ENCODE measurements at regions of chr11 and their contacts with region 1.

Region 1: DNA sequence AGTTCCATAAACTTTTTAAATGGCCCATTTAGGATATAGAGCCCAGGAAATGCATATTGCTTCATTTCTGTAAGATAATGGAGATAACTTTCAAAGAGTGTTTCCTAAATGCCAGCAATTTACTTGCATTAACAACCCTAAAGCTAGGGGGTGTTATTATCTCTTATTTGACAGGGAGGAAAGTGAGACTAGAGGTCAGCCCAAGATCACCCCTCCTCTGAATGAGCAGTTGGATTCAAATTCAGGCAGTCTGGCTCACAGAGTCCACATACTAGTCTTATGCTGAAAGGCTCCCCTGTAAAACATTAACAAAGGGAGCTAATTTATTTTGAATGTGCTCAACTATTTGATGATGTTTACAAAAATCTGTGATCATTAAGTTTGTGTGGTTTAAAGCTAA is 49.9 kb upstream of the TRIM77 start:
- DNase-seq: no peak
- ATAC-seq: no peak
- H3K4me3 ChIP-seq: no peak overlapping the region
- H3K27ac ChIP-seq: no peak overlapping the region
- H3K4me1 ChIP-seq: no peaks in the 10 kb centered on the region
- H3K27me3 ChIP-seq: no peaks in the 10 kb centered on the region
- CTCF ChIP-seq: no peak
- EP300 ChIP-seq: no peak
- POLR2A ChIP-seq: no peak
- RAD21 ChIP-seq: no peak

Region 2: DNA sequence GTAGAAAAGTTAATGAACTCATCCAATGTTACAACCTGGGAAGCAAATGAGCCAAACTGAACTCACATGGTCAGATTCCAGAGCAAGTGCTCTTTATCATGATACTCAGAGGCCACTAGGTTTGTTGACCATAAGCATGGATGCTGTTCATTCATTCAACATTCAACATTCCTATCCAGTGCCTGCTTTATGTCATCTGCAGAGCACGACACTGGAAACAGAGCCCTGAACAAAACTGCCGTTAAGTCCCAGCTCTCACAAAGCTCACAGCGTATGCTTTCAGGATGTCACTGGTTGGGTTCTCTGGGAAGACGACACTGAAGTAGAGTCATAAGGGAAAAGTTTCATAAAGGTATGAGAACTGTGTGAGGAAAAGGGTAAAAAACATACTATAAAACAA is 56.0 kb before region 1 on chr11:
- CTCF ChIA-PET with region 1: no interaction called
- POLR2A ChIA-PET with region 1: no interaction called
- RAD21 ChIA-PET with region 1: no interaction called
- SMC1A ChIA-PET with region 1: no interaction called
- in situ Hi-C with region 1: no loop called
- intact Hi-C with region 1: no loop called
- DNase-seq: no peak
- ATAC-seq: no peak
- H3K4me3 ChIP-seq: no peak overlapping the region
- H3K27ac ChIP-seq: no peak overlapping the region
- H3K4me1 ChIP-seq: no peaks in the 10 kb centered on the region
- H3K27me3 ChIP-seq: no peaks in the 10 kb centered on the region
- CTCF ChIP-seq: no peak
- EP300 ChIP-seq: no peak
- POLR2A ChIP-seq: no peak
- RAD21 ChIP-seq: no peak

Region 3: DNA sequence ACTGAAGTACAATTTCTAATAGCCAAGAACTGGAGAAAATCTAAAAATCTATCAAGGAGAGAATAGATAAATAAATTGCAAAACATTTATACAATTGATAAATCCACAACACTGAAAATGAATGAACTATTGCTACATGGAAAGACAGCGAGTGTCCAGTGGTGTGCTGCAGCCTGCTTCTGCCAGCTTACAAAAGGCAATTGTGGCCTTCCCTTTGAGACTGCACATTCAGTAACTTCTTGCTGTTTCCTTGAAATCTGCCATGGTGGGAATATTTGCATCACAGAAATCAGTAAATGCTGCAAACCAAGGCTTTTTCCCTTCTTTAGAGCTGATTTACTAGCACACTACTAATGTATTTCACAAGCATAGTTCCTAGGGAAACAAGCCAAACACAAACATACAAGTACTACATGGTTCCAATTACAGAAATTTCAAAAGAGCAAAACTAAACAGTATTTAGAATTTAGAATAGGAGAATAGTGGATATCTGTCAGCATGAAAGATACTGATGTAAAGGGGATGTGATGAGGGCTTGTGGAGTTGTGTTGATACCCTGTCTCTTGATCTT is 27.0 kb before region 1 on chr11:
- CTCF ChIA-PET with region 1: no interaction called
- POLR2A ChIA-PET with region 1: no interaction called
- RAD21 ChIA-PET with region 1: no interaction called
- SMC1A ChIA-PET with region 1: no interaction called
- in situ Hi-C with region 1: no loop called
- intact Hi-C with region 1: no loop called
- DNase-seq: no peak
- ATAC-seq: no peak
- H3K4me3 ChIP-seq: no peak overlapping the region
- H3K27ac ChIP-seq: no peak overlapping the region
- H3K4me1 ChIP-seq: no peaks in the 10 kb centered on the region
- H3K27me3 ChIP-seq: no peaks in the 10 kb centered on the region
- CTCF ChIP-seq: no peak
- EP300 ChIP-seq: no peak
- POLR2A ChIP-seq: no peak
- RAD21 ChIP-seq: no peak

Region 4: GRCh38 chr11:90113541-90113940 is 453.3 kb after region 1 on chr11:
- CTCF ChIA-PET with region 1: no interaction called
- POLR2A ChIA-PET with region 1: no interaction called
- RAD21 ChIA-PET with region 1: no interaction called
- SMC1A ChIA-PET with region 1: no interaction called
- in situ Hi-C with region 1: loop called (anchors 25 kb)
- intact Hi-C with region 1: no loop called
- DNase-seq: no peak
- ATAC-seq: no peak
- H3K4me3 ChIP-seq: no peak overlapping the region
- H3K27ac ChIP-seq: no peak overlapping the region
- H3K4me1 ChIP-seq: no peaks in the 10 kb centered on the region
- H3K27me3 ChIP-seq: no peaks in the 10 kb centered on the region
- CTCF ChIP-seq: peak in 1 of 3 experiments; percentile 20; a peak in 2 of 6 replicates
- EP300 ChIP-seq: no peak
- POLR2A ChIP-seq: no peak
- RAD21 ChIP-seq: no peak